ENCODE measurements at regions of chr9 and their contacts with region 1.

Region 1: DNA sequence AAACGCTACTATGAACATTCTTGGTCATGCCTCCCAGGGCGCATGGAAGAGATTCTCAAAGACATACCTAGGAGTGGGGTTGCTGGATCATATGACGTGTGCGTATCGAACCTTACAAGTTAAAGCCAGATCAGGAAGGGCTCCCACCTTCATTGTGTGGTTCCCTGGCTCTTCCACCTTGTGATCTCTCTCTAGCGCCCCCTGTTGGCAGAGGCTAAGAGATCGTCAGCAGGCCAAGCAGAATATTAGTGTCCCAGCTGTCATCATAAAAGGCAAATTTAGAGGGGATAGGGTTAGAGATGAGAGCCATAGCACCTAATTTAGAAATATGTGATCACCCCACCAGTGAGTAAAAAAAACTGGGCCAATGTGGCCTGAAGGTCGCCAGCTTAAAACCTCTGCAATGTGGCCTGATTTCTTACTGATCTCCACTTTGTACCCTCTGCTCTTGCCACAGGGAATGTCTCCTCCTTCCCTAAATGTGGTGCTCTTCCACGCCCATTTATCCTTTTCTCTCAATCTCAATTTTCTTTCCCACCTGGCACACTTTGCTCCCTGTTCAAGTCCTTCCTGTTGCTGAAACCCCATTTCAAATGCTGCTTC is 91.7 kb upstream of the SHB start:
- DNase-seq: peak; percentile 31
- H3K27ac ChIP-seq: no peak overlapping the region
- CTCF ChIP-seq: peak; percentile 85

Region 2: DNA sequence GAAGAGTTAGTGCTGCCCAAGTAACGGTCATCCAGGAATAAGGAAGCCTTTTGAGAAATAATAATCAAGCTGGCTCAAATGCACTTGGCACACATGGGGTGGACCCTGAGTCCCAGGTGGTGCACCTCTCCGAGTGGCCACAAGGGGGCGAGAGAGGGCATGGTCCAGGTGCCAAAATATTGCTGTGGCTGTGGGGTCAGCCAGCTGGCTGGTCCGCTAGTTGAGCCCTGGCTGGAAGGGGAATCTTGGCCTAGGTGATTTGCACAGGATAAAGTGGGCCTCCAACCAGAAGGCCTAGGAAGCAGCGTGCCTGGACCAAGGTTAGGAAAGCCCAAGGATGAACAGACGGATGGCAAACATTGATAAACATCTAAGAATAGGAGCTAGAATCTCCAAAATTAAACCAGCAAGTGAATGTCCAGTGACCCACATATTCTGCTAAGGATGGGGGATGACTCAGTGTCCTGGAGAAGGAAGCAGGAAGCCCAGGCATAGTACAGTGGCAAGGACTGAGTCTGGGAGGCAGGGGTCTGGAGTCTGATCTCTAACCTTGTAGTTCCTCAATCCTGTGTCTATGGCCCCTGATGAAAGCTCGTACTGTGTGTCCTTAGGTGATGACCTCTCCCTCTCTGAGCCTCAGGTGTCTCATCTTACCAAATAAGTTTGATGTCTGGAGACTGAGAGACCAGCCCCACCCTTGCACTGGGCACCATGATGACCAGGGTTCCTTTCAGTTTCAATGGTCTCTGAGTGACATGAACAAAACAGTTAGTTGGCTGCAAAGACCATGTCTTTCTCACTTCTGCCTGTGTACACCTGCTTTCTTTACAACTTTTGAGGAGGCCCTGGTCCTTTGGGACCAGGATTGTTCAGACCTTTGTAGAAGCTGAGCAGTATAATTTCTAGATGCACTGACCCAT is 72.4 kb before region 1 on chr9:
- CTCF ChIA-PET with region 1: interaction called, 11 read pairs
- POLR2A ChIA-PET with region 1: no interaction called
- DNase-seq: peak; percentile 76
- H3K27ac ChIP-seq: no peak overlapping the region
- CTCF ChIP-seq: peak; percentile 98

Region 3: DNA sequence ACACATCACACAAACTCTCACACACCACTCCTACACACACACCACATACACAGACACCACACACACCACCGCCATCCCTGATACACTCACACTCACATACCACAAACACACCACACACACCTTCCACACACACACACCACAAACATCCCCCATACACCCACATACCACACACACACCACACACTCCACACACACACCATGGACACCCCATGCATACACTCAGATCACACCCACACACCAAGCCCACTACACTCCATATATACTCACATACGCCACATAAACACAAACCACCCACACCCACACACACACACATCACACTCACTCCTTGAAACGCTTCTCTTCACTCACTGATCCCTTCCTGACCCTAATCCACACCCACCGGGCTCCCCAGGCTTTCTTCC is 468.8 kb after region 1 on chr9:
- CTCF ChIA-PET with region 1: no interaction called
- POLR2A ChIA-PET with region 1: no interaction called
- DNase-seq: no peak
- H3K27ac ChIP-seq: no peak overlapping the region
- CTCF ChIP-seq: no peak

Measured in RWPE1 (cell line).